ENCODE measurements at regions of chr10 and their contacts with region 1.

Region 1: GRCh38 chr10:43292755-43293676 is 26.2 kb upstream of the RASGEF1A start:
- DNase-seq: no peak
- H3K4me3 ChIP-seq: peak overlapping the region in 1 of 8 donors; percentile 3
- H3K27ac ChIP-seq: peak overlapping the region in 1 of 8 donors; percentile 53
- H3K4me1 ChIP-seq: peaks cover 0 to 44% (median 20%) of the 10 kb centered on the region in 6 donors
- H3K27me3 ChIP-seq: peaks cover 0 to 26% (median 0%) of the 10 kb centered on the region in 7 donors
- CTCF ChIP-seq: peak; percentile 55 to 86 (median 74)
- POLR2A ChIP-seq: no peak

Region 2: GRCh38 chr10:42952349-42952748 is 340.7 kb before region 1 on chr10:
- intact Hi-C with region 1: no loop called
- DNase-seq: peak; percentile 78
- H3K4me3 ChIP-seq: no peak overlapping the region
- H3K27ac ChIP-seq: peak overlapping the region in 3 of 8 donors; percentile 43 to 48 (median 43)
- H3K4me1 ChIP-seq: peaks cover 0 to 17% (median 0%) of the 10 kb centered on the region in 6 donors
- H3K27me3 ChIP-seq: peaks cover 0 to 20% (median 0%) of the 10 kb centered on the region in 7 donors
- CTCF ChIP-seq: no peak
- POLR2A ChIP-seq: no peak

Region 3: DNA sequence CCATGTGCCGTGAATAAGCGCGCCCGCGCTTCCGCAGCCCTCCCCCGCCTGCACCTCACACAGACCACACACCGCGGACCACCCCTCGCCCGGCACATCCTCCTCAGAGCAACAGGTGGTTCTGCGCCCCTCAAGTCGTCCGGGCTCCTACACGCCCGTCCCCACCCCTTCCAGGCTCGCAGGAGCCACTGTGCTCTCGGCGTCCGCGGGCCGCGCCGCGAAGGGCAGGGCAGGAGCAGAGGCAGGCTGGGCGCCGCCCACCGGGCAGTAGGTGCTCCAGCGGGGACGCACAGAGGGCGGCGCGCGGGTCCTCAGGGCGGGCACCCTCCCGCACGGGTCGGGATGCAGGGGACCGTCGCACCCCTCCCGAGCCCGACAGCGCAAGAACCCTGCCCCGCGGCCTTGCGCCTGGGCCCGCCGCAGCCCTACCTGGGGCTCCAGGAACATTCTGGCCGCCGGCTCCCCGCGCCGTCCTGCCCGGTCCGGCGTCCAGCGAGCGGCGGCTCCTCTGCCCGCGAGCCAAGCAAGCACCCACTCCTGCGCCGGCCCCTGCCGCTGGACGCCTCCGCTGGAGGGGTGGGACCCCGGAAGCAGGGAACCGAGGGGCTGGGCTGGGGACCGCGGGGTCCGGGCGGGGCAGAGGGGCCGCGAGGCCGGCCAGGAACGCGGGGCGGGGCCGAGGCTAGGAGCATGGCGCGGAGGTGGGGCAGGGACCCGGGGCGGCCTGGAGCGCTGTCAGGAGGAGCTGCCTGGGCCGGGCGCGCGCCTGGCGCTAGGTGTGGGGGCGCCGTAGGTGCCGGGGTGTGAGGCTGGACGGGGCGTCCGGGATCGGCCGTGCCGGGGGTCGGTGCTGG is 63.6 kb before region 1 on chr10:
- intact Hi-C with region 1: no loop called
- DNase-seq: peak; percentile 88
- H3K4me3 ChIP-seq: peak overlapping the region; percentile 20 to 78 (median 52)
- H3K27ac ChIP-seq: peak overlapping the region in 5 of 8 donors; percentile 69 to 88 (median 77)
- H3K4me1 ChIP-seq: peaks cover 3 to 60% (median 40%) of the 10 kb centered on the region in 6 donors
- H3K27me3 ChIP-seq: peaks cover 3 to 50% (median 25%) of the 10 kb centered on the region in 7 donors
- CTCF ChIP-seq: peak in 1 of 11 experiments; percentile 9
- POLR2A ChIP-seq: no peak

Region 4: GRCh38 chr10:43461950-43462349 is 168.9 kb after region 1 on chr10:
- intact Hi-C with region 1: loop called (anchors 1 kb)
- DNase-seq: no peak
- H3K4me3 ChIP-seq: peak overlapping the region in 1 of 8 donors; percentile 43
- H3K27ac ChIP-seq: no peak overlapping the region
- H3K4me1 ChIP-seq: peaks cover 0 to 13% (median 7%) of the 10 kb centered on the region in 6 donors
- H3K27me3 ChIP-seq: no peaks in the 10 kb centered on the region
- CTCF ChIP-seq: peak; percentile 38 to 81 (median 72)
- POLR2A ChIP-seq: no peak

Measured in spleen (tissue), 13 donors.